PC-3 (cell line): ENCODE measurements at regions of chr6 and their contacts with region 1.

Region 1: GRCh38 chr6:157428427-157429202 is 47.6 kb downstream of the ZDHHC14 start:
- DNase-seq: peak; percentile 95
- ATAC-seq: peak; percentile 93
- H3K4me3 ChIP-seq: peak overlapping the region; percentile 57; the same call in 1 of the 2 replicates
- H3K27ac ChIP-seq: peak overlapping the region; percentile 74
- H3K4me1 ChIP-seq: peaks cover 42% of the 10 kb centered on the region
- H3K27me3 ChIP-seq: no peaks in the 10 kb centered on the region
- CTCF ChIP-seq: no peak

Region 2: DNA sequence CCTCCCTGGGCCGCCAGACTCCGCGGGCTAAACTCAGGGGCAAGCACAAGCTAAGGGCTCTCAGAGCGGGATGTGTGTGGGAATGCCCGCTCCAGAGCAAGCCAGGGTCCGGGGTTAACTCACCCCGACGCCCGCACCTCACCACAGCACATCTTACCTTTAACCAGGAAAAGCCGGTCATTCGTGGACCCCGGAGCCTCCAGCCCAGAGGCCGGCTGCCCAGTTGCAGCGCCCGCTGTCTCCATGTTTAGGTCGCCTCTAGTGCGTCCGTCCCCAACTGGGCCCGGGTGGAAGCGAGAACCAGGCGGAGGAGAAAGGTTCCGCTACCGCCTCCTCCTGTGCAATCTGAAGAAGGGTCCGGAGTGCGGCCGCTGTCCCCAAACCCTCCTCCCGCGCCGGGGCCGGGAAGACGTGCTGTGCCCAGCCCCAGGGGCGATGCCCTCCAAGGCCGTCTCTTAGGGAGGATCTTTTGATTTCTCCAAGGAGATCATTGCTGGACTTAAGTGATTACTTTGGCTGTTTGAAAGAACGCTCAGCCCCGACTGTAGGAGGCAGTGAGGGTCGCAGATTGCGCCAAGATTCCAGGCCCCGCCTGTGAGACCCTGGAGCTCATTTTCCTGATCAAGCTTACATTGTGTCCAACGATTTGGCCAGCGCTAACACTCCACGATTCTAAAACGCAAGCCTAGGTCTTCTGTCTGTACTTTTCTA is 105.2 kb before region 1 on chr6 and contains the start of gene TMEM242:
- CTCF ChIA-PET with region 1: no interaction called
- POLR2A ChIA-PET with region 1: no interaction called
- intact Hi-C with region 1: loop called (anchors 5 kb)
- DNase-seq: peak; percentile 91
- ATAC-seq: peak; percentile 79
- H3K4me3 ChIP-seq: peak within 1 kb of the TSS; percentile 85
- H3K27ac ChIP-seq: peak within 1 kb of the TSS; percentile 56
- H3K4me1 ChIP-seq: peaks cover 12% of the 10 kb centered on the region
- H3K27me3 ChIP-seq: no peaks in the 10 kb centered on the region
- CTCF ChIP-seq: no peak
- total RNA-seq, gene TMEM242: 7.9 and 10.3 TPM in 2 replicates

Region 3: DNA sequence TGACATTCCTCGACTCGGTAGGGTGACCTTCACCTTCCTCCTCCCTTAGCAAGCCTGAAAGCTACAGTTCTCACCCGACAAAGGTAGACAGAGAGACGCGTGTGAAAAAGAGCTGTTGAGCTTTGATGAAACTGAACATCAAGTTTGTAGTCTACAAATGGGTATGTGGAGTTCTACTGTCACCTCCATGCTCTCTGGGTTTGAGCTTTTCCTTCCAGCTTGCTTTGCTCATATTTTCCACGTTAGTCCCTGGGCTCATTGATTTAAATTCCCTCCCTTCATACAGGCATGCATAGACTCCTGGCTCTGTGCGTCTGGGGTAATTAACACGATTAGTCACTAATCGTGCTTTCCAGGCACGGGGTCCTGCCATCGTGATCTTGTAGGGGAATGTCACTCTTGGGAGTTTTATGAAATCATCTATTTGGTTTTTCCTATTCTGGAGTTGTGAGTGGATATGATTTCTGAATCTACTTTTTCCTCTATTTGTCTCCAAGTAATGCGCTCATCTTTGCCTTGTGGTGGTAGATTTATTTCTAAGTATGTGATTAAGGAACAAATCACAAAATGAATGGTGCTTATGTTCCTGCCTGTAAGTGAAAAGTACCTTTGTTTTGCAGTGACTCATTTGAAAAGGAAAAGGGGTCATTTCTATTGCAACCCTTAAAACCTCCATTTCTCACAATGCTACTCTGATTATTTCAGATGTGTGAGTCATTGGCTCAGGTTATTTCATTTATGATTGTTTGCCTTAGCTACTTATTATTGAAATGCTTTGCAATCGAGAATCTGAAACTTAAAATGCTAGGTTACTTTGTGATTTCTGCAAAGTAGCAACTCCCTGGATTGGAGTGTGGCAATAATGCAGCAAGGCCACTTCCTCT is 107.0 kb after region 1 on chr6:
- CTCF ChIA-PET with region 1: no interaction called
- POLR2A ChIA-PET with region 1: no interaction called
- intact Hi-C with region 1: loop called (anchors 1 kb)
- DNase-seq: peak; percentile 81
- ATAC-seq: peak; percentile 94
- H3K4me3 ChIP-seq: peak overlapping the region; percentile 34; the same call in 1 of the 2 replicates
- H3K27ac ChIP-seq: peak overlapping the region; percentile 83
- H3K4me1 ChIP-seq: peaks cover 17% of the 10 kb centered on the region
- H3K27me3 ChIP-seq: no peaks in the 10 kb centered on the region
- CTCF ChIP-seq: no peak

Region 4: DNA sequence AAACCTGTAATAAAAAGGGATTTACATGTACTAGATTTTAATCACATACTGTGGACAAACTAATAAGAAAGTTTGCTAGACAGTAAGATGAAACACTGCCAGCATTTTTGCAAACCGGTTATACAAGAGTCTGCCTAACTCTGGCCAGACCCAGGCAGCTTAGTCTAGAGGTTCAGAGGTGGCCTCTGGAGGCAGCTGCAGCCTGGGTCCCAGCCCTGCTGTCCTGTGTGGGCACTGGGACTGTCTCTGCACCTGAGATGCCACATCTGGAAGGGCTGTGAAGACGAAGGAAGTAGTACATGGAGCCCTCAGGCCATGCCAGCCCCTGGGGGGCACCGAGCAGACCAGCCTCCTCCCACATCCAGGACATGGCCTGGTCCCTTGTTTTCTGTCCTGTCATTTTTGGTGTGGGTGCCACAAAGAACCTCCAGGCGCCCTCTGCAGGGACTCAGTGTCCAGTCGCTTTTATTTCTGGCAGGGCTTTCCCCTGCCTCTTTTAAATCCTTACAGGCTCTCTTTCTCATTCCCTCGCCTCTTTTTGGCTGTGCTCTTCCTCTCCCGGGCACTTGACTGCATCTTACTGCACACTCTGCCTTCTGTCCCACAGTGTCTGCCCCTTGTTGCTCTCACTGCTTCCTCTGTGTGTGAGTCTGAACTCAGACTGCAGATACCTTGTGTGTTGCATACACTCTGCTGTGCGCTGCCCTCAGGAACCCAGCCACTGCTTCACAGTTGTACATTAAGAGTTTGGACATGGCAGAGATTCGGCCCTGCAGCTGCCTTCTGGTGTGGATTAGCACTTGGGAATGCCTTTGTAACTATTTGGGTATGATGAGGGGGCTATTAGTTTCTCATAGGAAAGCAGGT is 169.1 kb after region 1 on chr6:
- CTCF ChIA-PET with region 1: interaction called, 8 read pairs
- POLR2A ChIA-PET with region 1: no interaction called
- intact Hi-C with region 1: loop called (anchors 5 kb)
- DNase-seq: peak; percentile 69
- ATAC-seq: peak; percentile 85
- H3K4me3 ChIP-seq: no peak overlapping the region
- H3K27ac ChIP-seq: peak overlapping the region; percentile 20; the same call in 1 of the 2 replicates
- H3K4me1 ChIP-seq: peaks cover 14% of the 10 kb centered on the region
- H3K27me3 ChIP-seq: no peaks in the 10 kb centered on the region
- CTCF ChIP-seq: peak; percentile 67